ENCODE measurements at regions of chr21 and their contacts with region 1.

Region 1: DNA sequence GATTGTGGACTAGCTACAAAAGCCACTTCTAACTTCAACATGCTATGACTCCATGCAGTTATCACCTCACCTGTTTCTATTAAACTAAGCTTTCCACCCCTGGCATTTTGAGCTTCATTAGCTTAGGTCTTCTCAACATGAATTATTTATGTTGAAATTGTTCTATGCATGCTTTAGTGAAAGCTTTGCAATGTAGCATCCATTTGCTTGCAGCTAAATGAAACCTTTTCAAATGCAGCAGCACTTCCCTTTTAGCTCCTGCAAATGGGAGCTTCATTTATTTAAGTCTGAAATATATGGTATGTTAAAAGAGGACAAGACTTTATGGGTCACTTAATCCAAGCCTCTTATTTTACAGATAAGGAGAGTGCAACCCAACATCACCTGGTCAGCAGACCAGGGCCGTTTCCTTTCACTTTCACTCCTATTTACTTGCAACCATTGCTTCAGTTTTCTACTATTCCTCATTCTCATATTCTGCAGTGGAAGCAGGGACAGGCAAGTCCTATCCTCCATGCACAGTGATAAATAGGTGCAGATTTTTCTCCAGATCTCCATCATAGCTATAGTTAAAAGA is 56.4 kb upstream of the SAMSN1 start:
- DNase-seq: peak in 2 of 9 experiments; percentile 19 to 39
- ATAC-seq: no peak
- H3K4me3 ChIP-seq: peak overlapping the region; percentile 30 to 38
- H3K4me3 Mint-ChIP-seq: peak overlapping the region; percentile 70
- H3K27ac ChIP-seq: no peak overlapping the region
- H3K27ac Mint-ChIP-seq: no peak overlapping the region
- H3K4me1 ChIP-seq: peaks cover 9% of the 10 kb centered on the region
- H3K4me1 Mint-ChIP-seq: peaks cover 19% of the 10 kb centered on the region
- H3K27me3 ChIP-seq: no peaks in the 10 kb centered on the region
- H3K27me3 Mint-ChIP-seq: no peaks in the 10 kb centered on the region
- CTCF ChIP-seq: no peak

Region 2: DNA sequence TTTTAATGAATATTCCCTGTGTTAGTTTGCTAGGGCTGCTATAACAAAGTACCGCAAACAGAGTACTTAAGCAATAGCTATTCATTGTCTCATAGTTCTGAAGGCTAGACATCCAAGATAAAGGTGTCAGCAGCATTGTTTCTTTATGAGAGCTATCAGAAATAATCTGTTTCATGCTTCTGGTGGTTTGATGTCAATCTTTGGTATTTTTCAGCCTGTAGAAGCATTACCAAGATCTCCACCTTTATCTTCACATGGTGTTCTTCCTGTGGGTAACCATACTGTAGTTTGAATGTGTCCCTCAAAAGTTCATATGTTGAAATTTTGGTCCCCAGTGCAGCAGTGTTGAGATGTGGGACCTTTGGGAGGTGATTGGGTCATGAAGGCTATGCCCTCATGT is 379.1 kb before region 1 on chr21:
- CTCF ChIA-PET with region 1: no interaction called
- POLR2A ChIA-PET with region 1: no interaction called
- intact Hi-C with region 1: no loop called
- DNase-seq: no peak
- ATAC-seq: no peak
- H3K4me3 ChIP-seq: no peak overlapping the region
- H3K4me3 Mint-ChIP-seq: no peak overlapping the region
- H3K27ac ChIP-seq: no peak overlapping the region
- H3K27ac Mint-ChIP-seq: no peak overlapping the region
- H3K4me1 ChIP-seq: no peaks in the 10 kb centered on the region
- H3K4me1 Mint-ChIP-seq: no peaks in the 10 kb centered on the region
- H3K27me3 ChIP-seq: no peaks in the 10 kb centered on the region
- H3K27me3 Mint-ChIP-seq: no peaks in the 10 kb centered on the region
- CTCF ChIP-seq: no peak

Region 3: DNA sequence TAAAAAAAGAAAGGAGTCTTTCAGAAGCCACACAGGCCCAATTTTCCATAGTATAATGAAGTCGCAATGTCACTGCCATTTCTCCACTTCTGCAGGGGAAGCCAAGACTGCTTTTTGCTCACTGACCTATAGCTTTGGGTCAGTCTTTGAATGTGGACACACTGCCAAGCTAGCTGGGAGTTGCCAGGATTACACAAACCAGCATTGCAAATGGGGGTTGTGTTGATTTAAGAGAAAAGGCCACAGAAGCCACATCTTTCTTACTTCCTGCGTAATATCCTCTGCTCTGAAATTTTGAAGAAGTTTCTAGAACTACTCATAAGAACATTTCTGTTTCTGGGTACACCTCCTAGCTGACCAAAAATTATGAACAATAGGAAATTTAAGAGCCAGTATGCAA is 10.6 kb before region 1 on chr21:
- CTCF ChIA-PET with region 1: no interaction called
- POLR2A ChIA-PET with region 1: no interaction called
- intact Hi-C with region 1: loop called in 1 of 2 experiments (anchors 2 kb)
- DNase-seq: peak in 2 of 9 experiments; percentile 35 to 56
- ATAC-seq: peak; percentile 23
- H3K4me3 ChIP-seq: no peak overlapping the region
- H3K4me3 Mint-ChIP-seq: no peak overlapping the region
- H3K27ac ChIP-seq: peak overlapping the region in 1 of 2 experiments; percentile 33
- H3K27ac Mint-ChIP-seq: peak overlapping the region; percentile 14
- H3K4me1 ChIP-seq: peaks cover 8% of the 10 kb centered on the region
- H3K4me1 Mint-ChIP-seq: peaks cover 11% of the 10 kb centered on the region
- H3K27me3 ChIP-seq: no peaks in the 10 kb centered on the region
- H3K27me3 Mint-ChIP-seq: no peaks in the 10 kb centered on the region
- CTCF ChIP-seq: no peak